Activated B cell treated with CpG ODN at 0.5 μM for 24 hours (primary cell): ENCODE measurements at regions of chr12 and their contacts with region 1.

Region 1: GRCh38 chr12:5988659-5989116 is 43.6 kb upstream of the ANO2 start:
- DNase-seq: peak; percentile 60
- ATAC-seq: peak; percentile 91
- H3K4me3 Mint-ChIP-seq: no peak overlapping the region
- H3K27ac Mint-ChIP-seq: no peak overlapping the region
- H3K4me1 Mint-ChIP-seq: no peaks in the 10 kb centered on the region
- H3K27me3 Mint-ChIP-seq: peaks cover 2% of the 10 kb centered on the region
- CTCF ChIP-seq: peak; percentile 59

Region 2: GRCh38 chr12:5295151-5295550 is 693.5 kb before region 1 on chr12:
- CTCF ChIA-PET with region 1: no interaction called
- POLR2A ChIA-PET with region 1: no interaction called
- intact Hi-C with region 1: no loop called
- DNase-seq: no peak
- ATAC-seq: no peak
- H3K4me3 Mint-ChIP-seq: no peak overlapping the region
- H3K27ac Mint-ChIP-seq: no peak overlapping the region
- H3K4me1 Mint-ChIP-seq: no peaks in the 10 kb centered on the region
- H3K27me3 Mint-ChIP-seq: peaks cover 4% of the 10 kb centered on the region
- CTCF ChIP-seq: no peak

Region 3: DNA sequence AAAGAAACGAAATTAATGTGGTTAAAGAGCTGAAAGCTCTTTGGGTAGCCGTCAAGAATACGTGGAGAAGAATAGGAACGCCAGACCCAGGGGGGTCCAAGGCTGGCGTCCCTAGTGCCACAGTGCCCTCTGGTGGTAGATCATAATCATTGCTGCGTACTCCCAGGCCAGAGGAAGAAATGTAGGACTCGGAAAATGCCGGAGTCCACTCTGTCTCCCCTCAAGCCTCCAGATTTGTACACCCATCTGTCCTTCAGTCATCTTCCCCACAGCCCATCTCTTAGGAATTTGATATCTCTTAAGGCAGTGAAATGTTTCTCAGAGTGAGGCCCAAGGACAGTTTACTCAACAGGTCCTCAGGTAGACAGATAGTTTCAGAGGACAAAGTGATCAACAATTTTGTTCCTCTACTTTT is 296.4 kb after region 1 on chr12:
- CTCF ChIA-PET with region 1: interaction called, 9 read pairs
- POLR2A ChIA-PET with region 1: no interaction called
- intact Hi-C with region 1: loop called (anchors 1 kb)
- DNase-seq: no peak
- ATAC-seq: peak; percentile 81
- H3K4me3 Mint-ChIP-seq: no peak overlapping the region
- H3K27ac Mint-ChIP-seq: no peak overlapping the region
- H3K4me1 Mint-ChIP-seq: no peaks in the 10 kb centered on the region
- H3K27me3 Mint-ChIP-seq: peaks cover 41% of the 10 kb centered on the region
- CTCF ChIP-seq: peak; percentile 79

Region 4: DNA sequence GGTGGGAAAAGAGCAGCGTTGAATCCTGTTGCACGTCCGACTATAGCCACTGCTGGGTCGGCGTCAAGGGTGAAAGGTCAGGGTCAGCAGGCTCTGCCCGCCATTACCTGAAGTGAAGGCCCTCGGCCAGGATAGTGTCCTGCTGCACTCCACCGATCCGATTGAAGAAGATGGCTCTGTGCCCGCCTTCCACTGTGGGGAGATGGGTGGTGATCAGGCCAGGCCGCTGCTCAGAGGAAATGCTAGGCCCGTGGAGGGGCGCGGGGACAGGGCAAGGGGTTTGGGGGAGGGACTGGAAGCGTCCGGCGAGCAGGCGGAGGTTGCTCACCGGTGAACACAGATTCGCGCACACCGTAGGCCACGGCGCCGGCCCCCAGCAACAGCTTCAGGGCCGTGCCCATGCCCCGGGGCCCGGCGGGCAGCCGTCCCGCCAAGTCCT is 981.4 kb after region 1 on chr12:
- CTCF ChIA-PET with region 1: no interaction called
- POLR2A ChIA-PET with region 1: no interaction called
- intact Hi-C with region 1: no loop called
- DNase-seq: no peak
- ATAC-seq: peak; percentile 3
- H3K4me3 Mint-ChIP-seq: peak overlapping the region; percentile 100
- H3K27ac Mint-ChIP-seq: peak overlapping the region; percentile 100
- H3K4me1 Mint-ChIP-seq: peaks cover 50% of the 10 kb centered on the region
- H3K27me3 Mint-ChIP-seq: no peaks in the 10 kb centered on the region
- CTCF ChIP-seq: no peak